ENCODE measurements at regions of chr10 and their contacts with region 1.

Region 1: DNA sequence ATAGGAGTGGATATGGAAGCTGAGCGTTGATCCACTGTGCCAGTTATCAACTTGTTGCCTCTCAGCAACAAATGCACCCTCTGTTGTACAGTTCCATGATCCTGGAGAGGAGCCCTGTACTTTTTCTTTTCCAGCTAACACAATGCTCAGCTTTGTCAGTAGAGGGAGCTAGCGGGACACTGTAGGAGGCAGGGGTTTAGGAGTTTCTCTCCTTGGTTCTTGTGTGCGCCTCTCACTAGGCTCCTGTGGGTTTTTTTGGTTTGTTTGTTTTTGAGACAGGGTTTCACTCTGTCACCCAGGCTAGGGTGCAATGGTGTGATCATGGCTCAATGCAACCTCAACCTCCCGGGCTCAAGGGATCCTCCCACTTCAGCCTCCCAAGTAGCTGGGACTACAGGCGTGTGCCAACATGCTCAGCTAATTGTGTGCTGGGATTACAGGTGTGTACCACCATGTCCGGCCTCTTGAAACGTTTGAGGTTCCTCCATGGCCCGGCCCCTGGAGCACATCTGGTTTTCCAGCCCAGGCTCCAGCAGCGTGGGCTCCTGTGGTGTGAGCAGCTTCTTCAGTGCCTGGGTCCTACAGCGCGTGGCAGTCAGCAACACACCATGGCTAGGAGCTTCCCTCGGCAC is 12.0 kb upstream of the MARVELD1 start:
- DNase-seq: peak; percentile 73
- H3K4me3 Mint-ChIP-seq: no peak overlapping the region
- H3K27ac Mint-ChIP-seq: no peak overlapping the region
- H3K4me1 Mint-ChIP-seq: no peaks in the 10 kb centered on the region
- H3K27me3 Mint-ChIP-seq: peaks cover 10% of the 10 kb centered on the region

Region 2: DNA sequence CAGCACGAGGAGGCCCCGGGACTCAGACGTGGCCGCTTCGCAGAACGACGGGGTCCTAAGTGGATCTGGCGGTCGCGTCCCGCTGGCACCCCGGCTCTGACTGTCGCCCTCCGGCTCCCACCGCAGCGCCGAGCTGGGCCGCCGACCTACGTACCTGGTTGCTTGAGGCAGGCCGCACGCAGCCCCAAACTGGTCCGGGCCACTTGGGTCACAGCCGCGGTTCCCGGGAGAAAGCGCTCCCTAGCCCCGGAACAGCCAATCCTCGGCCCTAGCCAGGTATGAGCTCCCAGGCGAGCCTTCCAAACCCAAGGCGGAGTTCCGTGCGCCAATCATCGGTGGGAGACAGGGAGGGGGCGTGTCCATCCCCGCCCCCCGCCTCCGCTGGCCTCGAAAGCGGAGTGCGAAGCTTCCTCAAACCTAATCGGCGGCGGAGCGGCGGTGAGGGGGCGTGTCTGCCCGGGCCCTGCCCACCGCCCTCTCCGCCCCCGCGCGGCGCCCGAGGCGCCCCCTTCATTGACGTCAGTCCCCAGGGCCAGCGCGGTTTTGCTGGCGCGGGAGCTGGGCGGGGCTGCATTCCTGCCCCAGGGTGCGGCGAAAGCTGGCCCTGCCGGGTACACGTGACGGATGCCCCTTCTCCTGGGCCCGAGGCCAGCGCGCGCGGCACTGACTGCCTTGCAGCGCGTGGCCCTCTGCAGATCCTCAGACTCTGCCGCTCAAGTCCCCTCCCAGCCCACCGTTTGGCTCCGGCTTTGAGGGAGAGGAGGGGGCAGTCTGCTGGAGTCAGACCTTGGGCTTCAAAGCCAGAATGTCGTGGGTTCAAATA is 14.4 kb before region 1 on chr10 and contains the start of gene AVPI1:
- CTCF ChIA-PET with region 1: interaction called, 29 read pairs
- POLR2A ChIA-PET with region 1: no interaction called
- DNase-seq: peak; percentile 93
- H3K4me3 Mint-ChIP-seq: peak within 1 kb of the TSS; percentile 76
- H3K27ac Mint-ChIP-seq: peak within 1 kb of the TSS; percentile 76
- H3K4me1 Mint-ChIP-seq: peaks cover 13% of the 10 kb centered on the region
- H3K27me3 Mint-ChIP-seq: no peaks in the 10 kb centered on the region
- total RNA-seq, gene AVPI1: 0.58 to 0.94 TPM

Region 3: DNA sequence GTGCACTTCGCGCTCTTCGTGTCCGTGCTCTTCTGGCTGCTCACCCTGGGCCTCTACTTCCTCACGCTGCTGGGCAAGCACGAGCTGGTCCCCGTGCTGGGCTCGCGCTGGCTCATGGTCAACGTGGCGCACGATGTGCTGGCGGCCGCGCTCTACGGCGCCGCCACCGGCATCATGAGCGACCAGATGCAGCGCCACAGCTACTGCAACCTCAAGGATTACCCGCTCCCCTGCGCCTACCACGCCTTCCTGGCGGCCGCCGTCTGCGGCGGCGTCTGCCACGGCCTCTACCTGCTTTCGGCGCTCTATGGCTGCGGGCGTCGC is 12.5 kb after region 1 on chr10:
- CTCF ChIA-PET with region 1: interaction called, 18 read pairs
- POLR2A ChIA-PET with region 1: no interaction called
- DNase-seq: peak; percentile 56
- H3K4me3 Mint-ChIP-seq: peak overlapping the region; percentile 93
- H3K27ac Mint-ChIP-seq: peak overlapping the region; percentile 84
- H3K4me1 Mint-ChIP-seq: peaks cover 15% of the 10 kb centered on the region
- H3K27me3 Mint-ChIP-seq: peaks cover 28% of the 10 kb centered on the region

Region 4: DNA sequence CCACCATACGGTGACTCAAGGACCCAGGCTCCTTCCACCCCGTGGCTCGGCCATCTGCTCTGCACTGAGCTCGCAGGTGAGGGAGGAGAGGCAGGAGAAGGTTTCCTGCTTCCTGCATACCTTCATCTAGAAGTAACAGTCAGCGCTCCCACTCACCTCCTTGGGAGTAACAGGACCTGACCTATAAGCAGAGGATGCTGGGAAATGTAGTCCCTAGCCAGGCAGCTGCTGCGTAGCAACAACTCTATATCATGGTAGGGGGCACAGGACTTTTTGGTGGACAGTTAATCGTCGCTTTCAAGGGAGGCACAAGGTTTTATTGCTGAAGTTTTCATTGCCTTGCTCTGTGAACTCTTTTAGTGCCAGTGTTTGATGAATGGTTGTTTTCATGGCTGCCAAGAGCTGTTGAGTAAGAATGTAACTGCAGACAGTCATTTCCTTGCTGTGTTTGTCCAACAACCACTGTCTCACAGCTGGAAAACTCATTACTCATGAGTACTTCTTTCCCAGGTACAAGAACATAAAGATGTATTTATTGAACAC is 25.2 kb after region 1 on chr10:
- CTCF ChIA-PET with region 1: interaction called, 10 read pairs
- POLR2A ChIA-PET with region 1: no interaction called
- DNase-seq: no peak
- H3K4me3 Mint-ChIP-seq: no peak overlapping the region
- H3K27ac Mint-ChIP-seq: no peak overlapping the region
- H3K4me1 Mint-ChIP-seq: peaks cover 2% of the 10 kb centered on the region
- H3K27me3 Mint-ChIP-seq: peaks cover 12% of the 10 kb centered on the region

Region 5: DNA sequence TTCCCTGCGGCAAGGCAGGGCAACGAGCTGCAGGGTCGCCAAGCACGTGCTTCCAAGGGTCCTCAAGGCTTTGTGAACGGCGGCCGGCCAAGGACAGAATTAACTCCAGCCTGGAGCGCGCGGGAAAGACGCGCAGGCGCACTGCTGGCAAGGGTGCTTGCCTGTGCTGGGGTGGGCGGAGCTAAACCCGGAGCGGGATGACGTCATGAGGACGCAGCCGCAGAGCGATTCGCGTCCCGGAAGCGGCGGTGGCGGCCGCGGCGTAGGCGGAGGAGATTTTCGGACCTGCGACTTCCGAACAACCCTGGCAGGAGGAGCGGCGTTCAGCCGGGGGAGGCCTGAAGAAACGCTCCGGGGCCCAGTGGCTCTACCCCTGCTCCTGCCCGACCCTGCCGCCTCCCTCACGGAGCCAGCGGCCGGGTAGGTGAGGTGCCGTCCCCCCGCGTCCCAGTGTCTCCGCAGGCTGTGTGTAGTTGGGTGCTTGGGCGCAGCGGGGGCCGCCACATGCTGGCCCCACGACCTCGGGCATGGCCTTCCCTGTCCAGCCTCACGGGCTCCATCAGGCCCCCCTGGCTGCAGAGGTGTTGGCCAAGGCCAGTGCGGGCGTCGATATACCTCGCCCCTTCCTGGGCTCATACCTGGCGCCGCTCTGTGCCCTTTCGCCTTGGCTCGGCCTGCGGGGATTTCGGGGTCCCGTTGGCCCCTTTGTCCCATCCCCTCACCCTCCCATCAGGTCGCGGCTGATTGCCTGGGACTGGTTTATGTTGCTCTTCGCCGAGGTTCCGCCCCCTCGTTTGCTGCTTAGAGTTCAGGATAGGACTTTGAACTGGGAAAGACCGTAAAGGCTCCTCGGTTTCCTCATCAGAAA is 35.6 kb after region 1 on chr10 and contains the start of gene ZFYVE27:
- CTCF ChIA-PET with region 1: interaction called, 20 read pairs
- POLR2A ChIA-PET with region 1: no interaction called
- DNase-seq: peak; percentile 95
- H3K4me3 Mint-ChIP-seq: peak within 1 kb of the TSS; percentile 92
- H3K27ac Mint-ChIP-seq: peak within 1 kb of the TSS; percentile 96
- H3K4me1 Mint-ChIP-seq: peaks cover 44% of the 10 kb centered on the region
- H3K27me3 Mint-ChIP-seq: no peaks in the 10 kb centered on the region
- total RNA-seq, gene ZFYVE27: 23.9 to 31.9 TPM

Region 6: GRCh38 chr10:97849687-97850402 is 148.3 kb after region 1 on chr10 and contains the start of gene GOLGA7B:
- CTCF ChIA-PET with region 1: no interaction called
- POLR2A ChIA-PET with region 1: no interaction called
- DNase-seq: peak; percentile 71
- H3K4me3 Mint-ChIP-seq: peak within 1 kb of the TSS; percentile 83
- H3K27ac Mint-ChIP-seq: peak within 1 kb of the TSS; percentile 88
- H3K4me1 Mint-ChIP-seq: peaks cover 43% of the 10 kb centered on the region
- H3K27me3 Mint-ChIP-seq: no peaks in the 10 kb centered on the region
- total RNA-seq, gene GOLGA7B: 12.2 to 12.6 TPM